ENCODE measurements at regions of chr14 and their contacts with region 1.

Region 1: GRCh38 chr14:63543000-63543825 is at the start of gene PPP2R5E:
- DNase-seq: peak; percentile 98
- H3K4me3 ChIP-seq: peak within 1 kb of the TSS; percentile 92
- H3K27ac ChIP-seq: peak within 1 kb of the TSS; percentile 70
- H3K4me1 ChIP-seq: peaks cover 25% of the 10 kb centered on the region
- CTCF ChIP-seq: no peak
- total RNA-seq, gene PPP2R5E: 10.1 and 12.5 TPM in 2 replicates

Region 2: DNA sequence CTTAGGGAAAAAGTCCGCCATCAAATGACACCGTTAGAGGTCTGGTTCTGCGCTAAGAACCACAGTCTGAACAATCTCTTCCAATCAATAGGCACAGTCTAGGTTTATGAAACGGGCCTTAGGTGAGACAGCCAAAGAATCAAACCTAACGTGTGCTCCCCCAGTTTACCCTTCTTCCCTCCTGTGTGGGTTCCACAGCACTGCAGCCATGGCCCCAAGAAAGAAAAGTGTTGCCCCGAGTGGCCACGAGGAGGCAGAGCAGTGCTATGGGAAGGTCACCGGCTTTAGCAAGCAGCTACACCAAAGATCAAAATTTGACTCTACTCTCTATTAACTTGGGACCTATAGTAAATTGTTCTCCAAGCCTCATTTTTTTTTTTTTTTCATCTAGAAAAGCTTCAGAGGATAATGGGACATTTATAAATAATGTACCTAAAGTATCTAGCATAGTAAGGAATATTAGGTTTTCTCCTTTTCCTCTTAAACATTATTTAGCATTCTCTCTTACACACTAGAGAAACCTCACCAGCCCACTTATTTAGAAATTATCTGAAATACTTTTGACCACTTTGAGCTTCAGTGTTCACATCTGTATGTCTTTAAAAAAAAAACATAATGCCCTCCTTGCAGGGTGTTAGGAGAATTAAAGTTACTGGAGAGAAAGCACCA is 154.3 kb before region 1 on chr14:
- CTCF ChIA-PET with region 1: interaction called, 3 read pairs
- POLR2A ChIA-PET with region 1: interaction called, 14 read pairs
- intact Hi-C with region 1: loop called (anchors 1 kb)
- DNase-seq: peak; percentile 65
- H3K4me3 ChIP-seq: no peak overlapping the region
- H3K27ac ChIP-seq: no peak overlapping the region
- H3K4me1 ChIP-seq: no peaks in the 10 kb centered on the region
- CTCF ChIP-seq: peak; percentile 96

Region 3: DNA sequence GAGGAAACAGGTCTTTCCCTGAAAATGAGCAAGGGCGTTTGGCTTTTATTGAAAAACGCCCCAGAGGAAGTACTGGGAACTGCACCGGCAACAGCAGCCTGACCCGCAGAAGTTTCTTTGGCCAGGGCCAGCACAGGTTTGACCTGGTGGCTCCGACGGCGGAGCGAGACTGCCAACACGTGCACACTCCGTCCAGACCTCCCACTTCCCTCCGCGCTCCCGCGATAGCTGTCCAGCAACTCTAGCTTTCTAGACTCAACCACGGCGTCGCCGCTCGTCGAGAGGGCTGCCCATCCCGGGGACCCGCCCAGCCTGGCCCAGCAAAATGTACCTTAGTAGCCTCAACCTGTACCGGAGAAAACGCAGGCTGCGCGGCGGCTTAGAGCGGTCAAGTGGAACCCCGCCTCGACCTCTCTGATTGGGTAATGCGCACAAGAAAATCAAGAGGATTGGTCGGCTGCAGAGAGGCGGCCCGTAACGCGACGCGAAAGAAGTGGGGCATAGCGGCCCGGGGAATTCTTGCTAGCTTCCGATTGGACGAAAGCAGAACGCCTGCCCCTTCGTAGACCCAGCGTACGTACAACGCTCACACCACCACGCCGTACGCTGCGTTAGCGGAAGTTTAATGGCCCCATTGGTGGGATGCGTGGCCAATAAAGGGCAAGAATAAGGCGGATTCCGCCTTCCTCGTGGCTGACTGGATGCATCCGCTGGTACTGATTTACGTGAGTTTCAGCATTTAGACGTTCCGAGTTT is 98.4 kb after region 1 on chr14 and contains the start of gene WDR89:
- CTCF ChIA-PET with region 1: no interaction called
- POLR2A ChIA-PET with region 1: interaction called, 14 read pairs
- intact Hi-C with region 1: loop called (anchors 2 kb)
- DNase-seq: peak; percentile 99
- H3K4me3 ChIP-seq: peak within 1 kb of the TSS; percentile 76
- H3K27ac ChIP-seq: peak within 1 kb of the TSS; percentile 89
- H3K4me1 ChIP-seq: peaks cover 30% of the 10 kb centered on the region
- CTCF ChIP-seq: peak; percentile 78
- total RNA-seq, gene WDR89: 14.7 and 15.5 TPM in 2 replicates

Region 4: DNA sequence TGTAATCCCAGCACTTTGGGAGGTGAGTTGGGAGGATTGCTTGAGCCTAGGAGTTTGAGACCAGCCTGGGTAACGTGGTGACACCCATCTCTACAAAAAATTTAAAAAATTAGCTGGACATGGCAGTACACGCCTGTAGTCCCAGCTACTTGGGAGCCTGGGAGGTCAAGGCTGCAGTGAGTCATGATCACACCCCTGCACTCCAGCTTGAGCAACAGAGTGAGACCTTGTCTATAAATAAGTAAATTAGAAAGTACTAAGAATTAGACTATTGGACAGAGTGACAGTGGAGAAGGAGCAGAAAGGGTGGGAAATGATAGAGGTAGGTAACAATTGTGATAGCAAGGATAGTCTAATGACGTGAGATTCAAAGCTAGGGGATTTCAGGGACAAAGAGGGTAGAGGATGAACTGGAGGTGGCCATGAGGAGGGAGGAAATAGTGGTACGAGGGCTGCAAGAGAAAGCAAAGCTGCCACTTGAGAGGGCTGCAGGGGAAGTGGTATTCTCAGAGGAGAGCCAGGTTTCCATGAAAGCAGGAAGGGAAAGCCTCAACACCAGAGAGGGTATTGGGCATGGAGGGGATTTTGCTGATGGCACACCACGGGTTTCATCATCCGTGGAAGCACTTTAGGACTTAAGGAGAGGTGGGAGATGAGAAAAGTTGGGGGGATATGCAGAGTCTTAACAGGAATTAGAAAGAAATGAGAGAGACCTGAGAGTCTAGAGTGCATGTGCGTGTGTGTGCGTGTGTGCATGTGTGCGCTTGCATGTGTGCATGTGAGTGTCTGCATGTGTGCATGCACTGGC is 395.2 kb after region 1 on chr14:
- CTCF ChIA-PET with region 1: no interaction called
- POLR2A ChIA-PET with region 1: no interaction called
- intact Hi-C with region 1: no loop called
- DNase-seq: peak; percentile 33
- H3K4me3 ChIP-seq: no peak overlapping the region
- H3K27ac ChIP-seq: peak overlapping the region; percentile 23
- H3K4me1 ChIP-seq: peaks cover 40% of the 10 kb centered on the region
- CTCF ChIP-seq: no peak

Measured in OCI-LY7 (cell line).